Activated CD4-positive, alpha-beta T cell treated with anti-CD3 and anti-CD28 coated beads, Interleukin-2, amount 10 ng/mL, durations not matched to agents 24 days and 14 days (primary cell): ENCODE measurements at regions of chr5 and their contacts with region 1.

Region 1: DNA sequence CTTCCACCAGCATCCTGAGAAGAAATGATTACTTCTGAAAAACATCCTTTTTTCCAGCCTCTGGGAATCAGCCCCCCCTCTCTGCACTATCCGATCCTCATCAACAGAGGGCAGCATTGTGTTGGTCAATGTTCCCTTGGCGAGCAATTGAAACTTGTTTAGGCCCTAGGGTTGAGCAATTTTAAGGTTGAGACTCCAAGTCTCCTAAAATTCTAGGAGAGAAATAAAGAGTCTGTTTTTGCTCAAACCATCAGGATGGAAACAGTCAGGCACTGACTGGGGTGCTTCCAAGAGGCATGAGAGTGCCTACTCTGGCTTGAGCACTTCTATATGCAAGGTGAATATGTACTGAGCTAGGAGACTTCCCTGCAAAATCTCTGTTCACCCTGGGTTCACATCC is 12.4 kb upstream of the CYFIP2 start:
- DNase-seq: no peak
- H3K4me3 Mint-ChIP-seq: peak overlapping the region; percentile 61
- H3K27ac Mint-ChIP-seq: peak overlapping the region; percentile 93
- H3K4me1 Mint-ChIP-seq: peaks cover 82% of the 10 kb centered on the region
- H3K27me3 Mint-ChIP-seq: no peaks in the 10 kb centered on the region

Region 2: GRCh38 chr5:156896545-156896944 is 357.0 kb before region 1 on chr5:
- intact Hi-C with region 1: no loop called
- DNase-seq: no peak
- H3K4me3 Mint-ChIP-seq: no peak overlapping the region
- H3K27ac Mint-ChIP-seq: no peak overlapping the region
- H3K4me1 Mint-ChIP-seq: peaks cover 31% of the 10 kb centered on the region
- H3K27me3 Mint-ChIP-seq: no peaks in the 10 kb centered on the region

Region 3: GRCh38 chr5:157180374-157181264 is 72.9 kb before region 1 on chr5 and contains the start of gene ITK:
- intact Hi-C with region 1: loop called (anchors 2 kb)
- DNase-seq: peak; percentile 89
- H3K4me3 Mint-ChIP-seq: peak within 1 kb of the TSS; percentile 98
- H3K27ac Mint-ChIP-seq: peak within 1 kb of the TSS; percentile 99
- H3K4me1 Mint-ChIP-seq: peaks cover 40% of the 10 kb centered on the region
- H3K27me3 Mint-ChIP-seq: no peaks in the 10 kb centered on the region
- total RNA-seq, gene ITK: 230 and 237 TPM in 2 replicates

Region 4: GRCh38 chr5:157189223-157189622 is 64.3 kb before region 1 on chr5:
- intact Hi-C with region 1: loop called (anchors 2 kb)
- DNase-seq: peak; percentile 76
- H3K4me3 Mint-ChIP-seq: peak overlapping the region; percentile 83
- H3K27ac Mint-ChIP-seq: peak overlapping the region; percentile 92
- H3K4me1 Mint-ChIP-seq: peaks cover 70% of the 10 kb centered on the region
- H3K27me3 Mint-ChIP-seq: no peaks in the 10 kb centered on the region

Region 5: GRCh38 chr5:157271740-157272271 is 18.3 kb after region 1 on chr5:
- intact Hi-C with region 1: loop called (anchors 1 kb)
- DNase-seq: peak; percentile 95
- H3K4me3 Mint-ChIP-seq: peak overlapping the region; percentile 96
- H3K27ac Mint-ChIP-seq: peak overlapping the region; percentile 99
- H3K4me1 Mint-ChIP-seq: peaks cover 81% of the 10 kb centered on the region
- H3K27me3 Mint-ChIP-seq: no peaks in the 10 kb centered on the region

Region 6: DNA sequence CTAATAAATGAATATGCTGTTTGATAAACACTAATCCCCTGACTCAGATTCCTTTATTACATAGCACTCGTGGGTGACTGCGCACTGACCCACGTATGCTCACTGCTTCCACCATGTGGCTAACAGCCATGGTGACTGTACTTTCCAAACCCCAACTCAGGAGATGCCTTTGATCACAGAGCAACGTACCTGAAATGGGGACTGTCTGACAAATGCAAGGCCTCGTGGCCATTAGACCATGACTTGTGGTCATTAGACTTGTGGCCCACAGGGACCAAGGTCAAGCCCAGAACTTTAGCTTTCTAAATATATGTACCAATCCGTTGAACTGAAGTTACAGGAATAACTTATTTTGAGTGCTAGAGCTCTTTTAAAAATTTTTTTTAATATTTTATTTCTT is 58.9 kb after region 1 on chr5:
- intact Hi-C with region 1: loop called (anchors 1 kb)
- DNase-seq: peak; percentile 87
- H3K4me3 Mint-ChIP-seq: no peak overlapping the region
- H3K27ac Mint-ChIP-seq: peak overlapping the region; percentile 86
- H3K4me1 Mint-ChIP-seq: peaks cover 22% of the 10 kb centered on the region
- H3K27me3 Mint-ChIP-seq: no peaks in the 10 kb centered on the region